Mucosa of descending colon (tissue), 3 donors: ENCODE measurements at regions of chrX and their contacts with region 1.

Region 1: GRCh38 chrX:65196758-65197360 is 220.6 kb upstream of the ZC4H2 start:
- DNase-seq: peak; percentile 78 to 85 (median 84)
- ATAC-seq: peak; percentile 96
- H3K4me3 ChIP-seq: no peak overlapping the region
- H3K4me1 ChIP-seq: no peaks in the 10 kb centered on the region
- CTCF ChIP-seq: no peak

Region 2: DNA sequence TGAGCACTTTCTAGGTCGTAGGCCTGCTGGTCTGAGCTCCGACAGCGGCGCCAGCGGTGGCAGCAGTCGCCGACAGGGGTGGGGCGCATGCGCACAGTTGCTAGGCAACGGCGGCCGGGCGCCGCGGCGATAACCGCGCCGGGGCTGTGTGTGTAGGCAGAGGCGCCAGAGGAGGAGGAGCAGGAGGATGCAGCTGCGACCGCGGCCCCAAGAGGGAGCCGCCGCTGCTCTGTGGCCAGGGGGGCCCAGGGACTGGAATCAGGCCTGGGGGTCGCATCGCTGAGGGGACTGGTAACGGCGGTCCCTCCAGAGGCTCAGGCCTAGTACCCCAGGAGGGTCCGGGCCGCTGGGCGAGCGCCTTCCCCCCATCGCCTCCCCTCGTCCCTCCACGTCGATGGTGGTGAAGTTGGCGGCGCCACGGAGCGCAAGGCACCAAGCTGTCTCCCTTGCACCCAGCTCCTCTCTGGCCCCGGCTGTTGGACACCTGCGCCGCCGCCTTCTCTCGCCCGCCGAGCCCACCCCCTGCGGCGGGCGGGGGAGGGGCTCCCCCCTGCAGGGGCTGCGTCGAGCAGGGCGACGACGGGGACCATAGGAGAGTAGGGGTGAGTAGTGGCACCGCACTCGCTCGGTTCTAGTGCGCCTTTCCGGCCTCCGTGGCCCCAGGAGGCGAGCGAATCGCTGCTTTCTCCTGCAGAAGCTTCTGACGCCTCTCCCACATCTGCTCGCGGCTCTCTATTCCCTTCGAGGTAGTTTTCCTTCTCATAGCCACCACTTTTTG is 162.0 kb before region 1 on chrX:
- intact Hi-C with region 1: loop called in 1 of 2 experiments (anchors 10 kb)
- DNase-seq: peak; percentile 76 to 88 (median 87)
- ATAC-seq: peak; percentile 97
- H3K4me3 ChIP-seq: peak within 1 kb of the TSS; percentile 28
- H3K4me1 ChIP-seq: no peaks in the 10 kb centered on the region
- CTCF ChIP-seq: no peak

Region 3: GRCh38 chrX:65476564-65476963 is 279.7 kb after region 1 on chrX:
- intact Hi-C with region 1: no loop called
- DNase-seq: no peak
- ATAC-seq: no peak
- H3K4me3 ChIP-seq: no peak overlapping the region
- H3K4me1 ChIP-seq: no peaks in the 10 kb centered on the region
- CTCF ChIP-seq: no peak